Ascending aorta (tissue), 2 donors: ENCODE measurements at regions of chr11 and their contacts with region 1.

Region 1: GRCh38 chr11:133966921-133967598 is 10.3 kb upstream of the IGSF9B start:
- DNase-seq: no peak
- H3K4me3 ChIP-seq: no peak overlapping the region
- H3K27ac ChIP-seq: no peak overlapping the region
- H3K4me1 ChIP-seq: peaks cover 4 to 13% of the 10 kb centered on the region in 2 donors
- H3K27me3 ChIP-seq: no peaks in the 10 kb centered on the region
- CTCF ChIP-seq: peak in 2 of 3 experiments; percentile 44 to 45

Region 2: DNA sequence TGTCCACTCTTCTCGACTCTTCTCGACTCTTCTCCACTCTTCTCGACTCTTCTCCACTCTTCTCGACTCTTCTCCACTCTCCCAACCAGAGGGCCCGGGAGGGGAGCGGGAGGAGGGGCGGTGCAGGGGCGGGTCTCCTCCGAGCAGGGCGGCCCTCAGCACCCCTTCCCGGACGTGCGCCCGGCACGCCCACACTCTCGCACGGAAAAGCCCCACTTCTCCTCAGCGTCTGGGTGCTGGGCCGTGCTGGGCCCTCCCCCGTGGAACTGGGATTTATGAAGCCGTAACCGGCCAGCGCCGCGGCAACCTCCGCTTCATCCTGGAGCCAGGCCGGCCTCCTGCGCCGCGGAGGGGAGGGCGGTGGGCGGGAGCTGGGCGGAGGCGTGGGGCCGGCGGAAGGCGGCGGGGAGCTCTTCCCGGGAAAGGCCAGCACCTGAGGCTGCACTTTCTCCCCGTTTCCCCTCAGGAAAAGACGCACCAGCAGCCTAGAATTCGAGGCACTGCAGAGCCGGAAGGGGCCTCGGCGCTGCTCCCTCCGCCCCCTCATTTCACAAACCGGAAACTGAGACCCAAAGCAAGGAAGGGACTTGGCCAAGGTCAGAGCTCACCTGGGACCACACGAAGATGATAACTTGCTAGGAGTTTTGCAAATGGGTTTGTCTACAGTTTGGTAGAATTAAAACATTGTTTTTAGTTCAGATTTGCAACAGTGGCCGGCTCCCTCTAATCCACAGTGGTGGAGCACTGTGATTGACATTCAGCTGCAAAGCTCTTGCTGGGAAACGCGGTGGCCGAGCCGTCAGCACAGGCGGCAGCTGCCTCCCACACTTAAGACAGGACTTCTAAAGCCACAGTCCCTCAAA is 70.2 kb after region 1 on chr11:
- intact Hi-C with region 1: loop called (anchors 2 kb)
- DNase-seq: peak in 1 of 2 donors; percentile 86
- H3K4me3 ChIP-seq: peak overlapping the region; percentile 58 to 70
- H3K27ac ChIP-seq: peak overlapping the region; percentile 87 to 89
- H3K4me1 ChIP-seq: peaks cover 23 to 36% of the 10 kb centered on the region in 2 donors
- H3K27me3 ChIP-seq: no peaks in the 10 kb centered on the region
- CTCF ChIP-seq: no peak

Region 3: DNA sequence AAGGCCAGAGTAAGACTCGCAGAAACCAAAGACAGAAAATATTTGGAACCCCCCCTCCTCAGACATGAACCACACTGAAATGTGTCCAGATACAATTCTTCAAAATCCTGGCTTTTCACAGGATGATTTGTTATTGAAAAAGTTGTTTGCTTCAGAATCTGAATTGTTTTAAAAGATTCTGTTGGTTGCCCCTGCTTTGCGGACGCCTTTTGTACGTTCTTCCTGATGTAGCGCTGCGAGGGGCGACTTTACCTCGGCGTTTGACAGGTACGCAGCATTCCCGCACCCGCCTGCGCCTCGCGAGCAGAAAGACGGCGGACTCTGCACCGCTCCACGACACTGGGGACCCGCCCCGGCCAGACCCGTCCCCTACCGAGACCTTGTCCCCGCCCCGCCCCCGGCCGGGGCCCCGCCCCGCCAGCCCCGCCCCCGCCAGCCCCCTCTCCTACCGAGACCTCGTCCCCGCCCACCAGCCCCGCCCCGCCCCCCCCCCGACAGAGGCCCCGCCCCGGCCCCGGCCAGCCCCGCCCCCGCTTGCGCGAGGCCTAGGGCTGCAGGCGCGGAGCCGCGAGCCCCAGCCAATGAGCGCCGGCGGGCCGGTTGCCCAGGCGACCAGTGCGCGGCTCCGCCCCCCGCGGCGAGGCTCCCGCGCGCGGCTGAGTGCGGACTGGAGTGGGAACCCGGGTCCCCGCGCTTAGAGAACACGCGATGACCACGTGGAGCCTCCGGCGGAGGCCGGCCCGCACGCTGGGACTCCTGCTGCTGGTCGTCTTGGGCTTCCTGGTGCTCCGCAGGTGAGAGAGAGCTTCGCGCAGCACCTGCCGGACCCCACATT is 364.5 kb after region 1 on chr11 and contains the start of gene GLB1L2:
- intact Hi-C with region 1: loop called (anchors 5 kb)
- DNase-seq: peak in 1 of 2 donors; percentile 80
- H3K4me3 ChIP-seq: peak within 1 kb of the TSS; percentile 58 to 61
- H3K27ac ChIP-seq: no peak within 1 kb of the TSS
- H3K4me1 ChIP-seq: peaks cover 0 to 8% of the 10 kb centered on the region in 2 donors
- H3K27me3 ChIP-seq: no peaks in the 10 kb centered on the region
- CTCF ChIP-seq: no peak
- total RNA-seq, gene GLB1L2: 1.7 TPM